OCI-LY7 (cell line): ENCODE measurements at regions of chr5 and their contacts with region 1.

Region 1: GRCh38 chr5:66122379-66123034 is 21.6 kb upstream of the SREK1 start:
- DNase-seq: no peak
- H3K4me3 ChIP-seq: no peak overlapping the region
- H3K27ac ChIP-seq: no peak overlapping the region
- H3K4me1 ChIP-seq: no peaks in the 10 kb centered on the region
- CTCF ChIP-seq: no peak

Region 2: GRCh38 chr5:65938256-65938655 is 184.3 kb before region 1 on chr5:
- CTCF ChIA-PET with region 1: no interaction called
- POLR2A ChIA-PET with region 1: no interaction called
- intact Hi-C with region 1: no loop called
- DNase-seq: peak; percentile 91
- H3K4me3 ChIP-seq: peak overlapping the region; percentile 54
- H3K27ac ChIP-seq: peak overlapping the region; percentile 87
- H3K4me1 ChIP-seq: peaks cover 65% of the 10 kb centered on the region
- CTCF ChIP-seq: no peak

Region 3: DNA sequence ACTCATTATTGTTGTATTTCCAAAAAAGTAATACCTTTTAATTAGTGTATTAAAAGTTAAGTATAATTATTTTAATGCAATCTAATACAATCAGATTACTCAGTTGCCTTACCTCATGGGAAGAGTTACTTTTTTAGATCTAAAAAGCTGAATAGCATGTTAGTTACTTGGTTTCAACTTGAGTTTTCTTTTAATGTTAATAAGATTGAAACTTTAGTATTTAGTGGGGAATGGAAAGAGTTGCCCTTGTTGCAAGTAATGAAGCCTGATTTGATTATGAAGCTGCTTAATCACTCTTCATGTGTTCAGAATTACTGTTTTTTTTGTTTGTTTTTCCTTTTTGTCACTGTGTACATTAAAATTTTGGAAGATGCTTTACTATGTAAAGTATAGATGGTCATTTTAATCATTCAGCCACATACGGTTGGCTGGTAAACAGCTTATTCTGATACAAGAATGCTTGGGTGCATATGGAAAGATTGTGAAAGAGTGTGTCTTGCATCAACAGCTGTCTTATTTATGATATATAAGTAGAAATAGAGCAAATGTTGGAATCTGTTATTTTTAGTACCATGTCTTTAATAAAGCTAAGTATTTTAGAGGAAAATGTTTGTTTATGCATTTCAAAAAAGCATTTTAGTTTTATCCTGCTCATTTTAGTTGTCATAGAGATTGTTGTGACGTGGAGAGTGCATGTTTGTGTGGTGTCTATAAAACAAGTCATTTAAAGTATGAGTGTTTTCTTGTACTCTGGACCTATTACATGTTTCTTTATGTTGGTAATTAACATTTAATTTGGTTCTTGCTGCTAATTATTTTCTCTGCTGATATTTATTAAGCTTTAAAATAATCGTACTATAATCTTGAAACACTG is 58.0 kb after region 1 on chr5:
- CTCF ChIA-PET with region 1: no interaction called
- POLR2A ChIA-PET with region 1: interaction called, 13 read pairs
- intact Hi-C with region 1: no loop called
- DNase-seq: no peak
- H3K4me3 ChIP-seq: no peak overlapping the region
- H3K27ac ChIP-seq: no peak overlapping the region
- H3K4me1 ChIP-seq: peaks cover 7% of the 10 kb centered on the region
- CTCF ChIP-seq: no peak